Sigmoid colon (tissue), 7 donors: ENCODE measurements at regions of chr2 and their contacts with region 1.

Region 1: DNA sequence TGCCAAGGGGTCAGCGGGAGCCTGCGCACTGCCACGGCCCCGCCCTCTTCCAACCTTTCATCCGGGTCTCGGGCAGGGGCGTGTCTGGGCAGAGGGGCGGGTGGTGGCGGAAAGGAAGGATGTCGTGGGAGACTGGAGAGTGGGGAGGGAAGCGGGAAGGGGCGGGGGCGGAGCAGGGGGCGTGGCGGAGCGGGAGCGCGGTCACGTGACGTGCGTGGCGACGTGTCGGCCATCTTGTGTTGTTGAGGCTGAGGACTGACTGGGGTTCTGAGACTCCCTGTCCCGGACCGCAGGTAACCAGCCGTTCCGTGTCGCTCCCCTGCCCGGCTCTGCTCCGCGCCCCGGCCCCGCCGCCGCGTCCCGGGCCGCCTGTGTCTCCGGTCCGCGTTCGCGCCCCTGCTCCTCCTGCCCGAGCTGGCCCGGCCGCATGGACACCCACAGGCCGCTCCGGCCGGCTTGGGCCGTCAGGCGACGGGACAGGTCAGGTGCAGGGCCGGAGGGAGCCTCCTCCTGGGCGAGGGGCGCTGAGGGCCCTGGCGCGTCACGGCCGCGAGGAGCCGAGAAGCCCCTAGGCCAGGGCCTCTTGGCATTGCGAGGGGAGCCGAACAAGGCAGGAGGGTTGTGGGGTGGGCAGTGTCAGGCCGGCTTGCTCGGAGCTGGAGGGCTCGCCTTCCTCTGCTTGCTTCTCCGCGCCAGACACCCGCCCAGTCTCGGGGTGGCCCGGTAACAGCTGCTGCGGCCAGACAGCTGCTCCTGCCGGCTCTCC is at the start of gene GIGYF2:
- DNase-seq: peak; percentile 98
- H3K4me3 ChIP-seq: peak within 1 kb of the TSS; percentile 69 to 94 (median 76)
- H3K27ac ChIP-seq: peak within 1 kb of the TSS; percentile 87 to 97 (median 90)
- H3K4me1 ChIP-seq: peaks cover 0 to 43% (median 32%) of the 10 kb centered on the region in 4 donors
- H3K27me3 ChIP-seq: no peaks in the 10 kb centered on the region
- CTCF ChIP-seq: no peak
- EP300 ChIP-seq: no peak
- POLR2A ChIP-seq: no peak
- total RNA-seq, gene GIGYF2: 62.9 to 90.0 (median 74.9) TPM

Region 2: DNA sequence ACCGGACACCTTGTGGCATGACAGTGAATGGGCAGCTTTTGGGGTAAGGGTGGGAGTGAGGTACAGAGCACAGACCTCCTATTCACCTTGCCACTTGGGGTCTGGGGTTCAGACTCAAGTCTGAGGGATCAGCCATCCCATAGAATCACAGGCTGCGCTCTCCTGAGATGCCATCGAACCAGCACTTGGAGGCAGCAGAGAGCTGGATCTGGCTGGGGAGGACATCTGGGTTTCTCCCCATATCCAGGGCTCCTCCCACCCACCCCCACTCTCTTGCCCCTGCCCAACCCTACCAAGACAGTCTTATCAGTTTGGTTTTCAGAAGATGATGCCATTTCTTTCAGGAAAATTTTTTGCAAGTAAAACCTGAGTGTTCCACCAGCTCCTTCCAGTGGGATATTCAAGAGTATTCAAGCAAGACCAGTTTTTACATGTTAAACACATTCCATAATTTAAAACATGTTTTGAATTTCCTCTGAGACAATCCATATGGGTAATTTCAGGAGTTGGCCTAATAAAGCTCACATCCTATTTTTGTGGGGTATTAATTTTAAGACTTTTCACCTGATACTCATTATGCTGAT is 1133.8 kb before region 1 on chr2:
- intact Hi-C with region 1: no loop called
- DNase-seq: peak; percentile 77
- H3K4me3 ChIP-seq: no peak overlapping the region
- H3K27ac ChIP-seq: no peak overlapping the region
- H3K4me1 ChIP-seq: no peaks in the 10 kb centered on the region
- H3K27me3 ChIP-seq: no peaks in the 10 kb centered on the region
- CTCF ChIP-seq: peak; percentile 13 to 70 (median 40)
- EP300 ChIP-seq: no peak
- POLR2A ChIP-seq: no peak

Region 3: GRCh38 chr2:232611551-232612218 is 85.6 kb before region 1 on chr2:
- intact Hi-C with region 1: loop called (anchors 2 kb)
- DNase-seq: no peak
- H3K4me3 ChIP-seq: no peak overlapping the region
- H3K27ac ChIP-seq: no peak overlapping the region
- H3K4me1 ChIP-seq: no peaks in the 10 kb centered on the region
- H3K27me3 ChIP-seq: no peaks in the 10 kb centered on the region
- CTCF ChIP-seq: peak; percentile 24 to 79 (median 58)
- EP300 ChIP-seq: no peak
- POLR2A ChIP-seq: no peak

Region 4: DNA sequence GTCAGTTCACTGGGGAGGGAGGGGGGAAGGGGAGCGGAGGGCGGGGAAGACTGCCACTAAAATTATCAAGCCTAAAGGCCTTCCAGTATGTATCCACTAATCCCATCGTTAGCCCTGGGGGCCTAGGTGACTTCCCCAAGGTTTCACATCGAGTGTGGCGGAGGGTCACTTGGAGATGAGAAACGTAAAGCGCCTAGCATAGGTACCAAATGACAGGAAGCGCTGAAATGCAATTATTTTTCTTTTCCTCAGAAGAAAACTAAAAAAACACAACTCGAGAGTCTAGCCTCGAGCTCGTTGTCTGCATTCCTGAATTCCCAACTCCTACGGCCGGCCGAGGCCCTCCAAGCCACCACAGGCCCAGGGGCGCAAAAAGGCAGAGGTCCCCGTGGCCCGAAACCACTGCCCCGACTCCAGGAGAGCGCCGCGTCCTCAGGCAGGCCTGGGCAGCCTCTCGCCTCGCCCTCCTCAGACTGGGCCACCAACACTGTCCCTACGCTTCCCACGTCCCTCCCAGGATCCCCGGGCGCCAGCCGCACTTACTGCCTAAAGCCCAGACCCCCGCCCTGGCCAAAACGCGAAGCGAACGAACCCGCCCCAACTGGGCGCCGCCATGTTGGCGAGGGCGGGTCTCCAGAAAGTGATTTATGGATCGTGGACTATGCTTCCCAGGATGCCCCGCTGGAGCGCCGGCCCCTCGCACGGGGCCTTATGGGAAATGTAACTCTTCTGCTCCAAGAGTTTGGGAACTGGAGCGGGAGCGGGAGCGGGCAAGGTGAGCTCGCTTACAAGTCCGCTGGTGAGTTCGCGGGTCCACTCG is 869.1 kb after region 1 on chr2 and contains the start of gene USP40:
- intact Hi-C with region 1: loop called (anchors 5 kb)
- DNase-seq: peak; percentile 94
- H3K4me3 ChIP-seq: peak within 1 kb of the TSS; percentile 85 to 96 (median 94)
- H3K27ac ChIP-seq: peak within 1 kb of the TSS; percentile 90 to 99 (median 96)
- H3K4me1 ChIP-seq: peaks cover 0 to 17% (median 3%) of the 10 kb centered on the region in 4 donors
- H3K27me3 ChIP-seq: no peaks in the 10 kb centered on the region
- CTCF ChIP-seq: no peak
- EP300 ChIP-seq: peak in 1 of 4 donors; percentile 72
- POLR2A ChIP-seq: peak; percentile 85 to 90
- total RNA-seq, gene USP40: 23.4 to 34.5 (median 31.3) TPM